Cardiac septum (tissue), 1 donor: ENCODE measurements at regions of chr17 and their contacts with region 1.

Region 1: GRCh38 chr17:43694077-43694870 is 32.6 kb upstream of the MEOX1 start:
- DNase-seq: peak; percentile 83

Region 2: GRCh38 chr17:43661699-43662412 is 32.4 kb before region 1 on chr17 and contains the start of gene MEOX1:
- intact Hi-C with region 1: no loop called
- DNase-seq: no peak
- total RNA-seq, gene MEOX1: 19.8 TPM

Region 3: DNA sequence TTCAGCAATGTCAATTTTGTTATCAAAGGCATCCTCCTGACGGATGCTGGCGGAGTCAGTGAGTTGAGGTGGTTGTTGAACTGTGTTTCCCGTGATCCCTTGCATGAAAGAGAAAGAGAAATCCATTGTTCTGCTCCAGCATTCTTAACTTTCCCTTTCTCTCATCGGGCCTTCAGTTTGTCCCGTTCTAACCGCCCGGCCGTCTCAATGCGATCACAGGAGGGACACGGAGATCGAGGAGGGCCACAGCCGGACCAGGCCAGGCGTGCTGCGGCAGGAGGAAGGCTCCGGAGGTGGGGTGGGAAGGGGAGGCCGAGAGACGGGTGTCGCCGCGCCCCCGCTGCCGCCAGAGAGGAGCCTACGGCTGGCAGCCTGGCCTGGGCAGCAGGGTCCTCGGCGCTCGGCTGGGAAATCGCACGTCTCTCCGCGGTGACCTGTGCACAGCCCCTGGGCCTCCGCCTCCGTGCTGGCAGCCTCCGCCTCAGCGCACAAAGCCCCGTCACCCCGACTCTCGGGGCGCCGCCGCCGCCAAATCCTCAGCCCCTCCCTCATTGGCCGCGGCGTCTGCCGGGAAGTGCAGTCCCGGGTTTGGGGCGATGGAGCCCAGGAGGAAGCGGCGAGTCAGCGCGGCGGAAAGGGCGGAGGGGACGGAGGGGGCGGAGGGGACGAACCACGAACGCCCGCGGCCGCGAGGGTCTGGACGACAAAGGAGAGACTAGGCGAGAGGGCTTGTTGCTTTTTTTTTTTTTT is 26.2 kb after region 1 on chr17:
- intact Hi-C with region 1: loop called (anchors 2 kb)
- DNase-seq: peak; percentile 93

Region 4: GRCh38 chr17:43760254-43760852 is 66.1 kb after region 1 on chr17:
- intact Hi-C with region 1: loop called (anchors 1 kb)
- DNase-seq: peak; percentile 95

Region 5: GRCh38 chr17:43846221-43846712 is 152.0 kb after region 1 on chr17:
- intact Hi-C with region 1: loop called (anchors 5 kb)
- DNase-seq: peak; percentile 91